Sigmoid colon (tissue), 7 donors: ENCODE measurements at regions of chr2 and their contacts with region 1.

Region 1: DNA sequence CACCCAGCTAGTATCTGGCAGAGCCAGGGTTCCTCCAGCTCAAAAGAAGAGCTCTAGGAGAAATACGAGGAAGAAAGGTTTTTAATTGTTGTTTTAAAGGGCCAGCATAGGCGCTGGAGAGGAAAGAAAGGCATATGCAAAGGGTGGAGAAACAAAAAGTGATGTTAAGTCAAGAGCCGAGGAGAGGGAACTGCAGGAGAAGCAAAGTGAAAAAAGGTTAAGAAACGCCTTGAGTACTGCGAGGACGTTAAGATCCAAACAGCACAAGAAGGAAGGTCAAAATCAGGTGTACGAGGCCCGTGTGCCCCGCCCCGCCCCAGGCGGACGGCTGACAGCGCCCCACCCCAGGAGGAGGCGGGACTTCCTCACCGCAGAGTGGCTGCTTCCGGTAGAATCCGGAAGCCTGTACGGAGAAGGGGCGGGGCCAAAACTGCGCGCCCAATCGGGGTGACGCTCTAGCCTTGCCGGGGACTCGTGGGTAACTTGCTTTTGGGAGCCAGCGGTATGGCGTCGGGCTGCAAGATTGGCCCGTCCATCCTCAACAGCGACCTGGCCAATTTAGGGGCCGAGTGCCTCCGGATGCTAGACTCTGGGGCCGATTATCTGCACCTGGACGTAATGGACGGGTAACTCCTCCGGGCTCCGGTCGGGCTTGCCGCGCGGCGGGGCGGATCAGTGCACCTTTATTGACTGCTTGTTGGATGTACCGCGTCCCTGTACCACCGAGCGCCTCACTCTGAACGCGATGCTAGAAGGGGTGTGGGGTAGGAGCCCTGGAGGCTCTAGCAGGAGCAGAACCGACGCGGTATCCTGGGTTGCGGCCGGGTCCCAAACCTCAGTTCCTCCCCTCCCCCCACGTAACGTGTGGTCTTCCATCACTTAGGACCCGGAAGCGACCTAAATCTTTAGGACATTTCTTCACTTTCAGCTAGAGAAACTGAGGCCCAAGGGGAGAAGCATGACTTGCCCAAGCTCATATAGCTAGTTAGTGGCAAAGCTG is at the start of gene RPE:
- DNase-seq: peak; percentile 97
- H3K4me3 ChIP-seq: peak within 1 kb of the TSS; percentile 71 to 99 (median 88)
- H3K27ac ChIP-seq: peak within 1 kb of the TSS; percentile 76 to 86 (median 80)
- H3K4me1 ChIP-seq: peaks cover 0 to 42% (median 34%) of the 10 kb centered on the region in 4 donors
- H3K27me3 ChIP-seq: no peaks in the 10 kb centered on the region
- CTCF ChIP-seq: no peak
- EP300 ChIP-seq: peak in 1 of 4 donors; percentile 1
- POLR2A ChIP-seq: peak in 1 of 2 donors; percentile 27
- total RNA-seq, gene RPE: 38.2 to 77.9 (median 48.8) TPM

Region 2: GRCh38 chr2:210171309-210172203 is 169.1 kb after region 1 on chr2 and contains the start of gene KANSL1L:
- intact Hi-C with region 1: loop called (anchors 2 kb)
- DNase-seq: peak; percentile 100
- H3K4me3 ChIP-seq: peak within 1 kb of the TSS; percentile 76 to 98 (median 94)
- H3K27ac ChIP-seq: peak within 1 kb of the TSS; percentile 99 to 100 (median 100)
- H3K4me1 ChIP-seq: peaks cover 0 to 39% (median 32%) of the 10 kb centered on the region in 4 donors
- H3K27me3 ChIP-seq: no peaks in the 10 kb centered on the region
- CTCF ChIP-seq: no peak
- EP300 ChIP-seq: peak in 1 of 4 donors; percentile 17
- POLR2A ChIP-seq: peak; percentile 46 to 75
- total RNA-seq, gene KANSL1L: 32.6 to 49.0 (median 47.0) TPM